Activated CD4-positive, alpha-beta memory T cell treated with anti-CD3 and anti-CD28 coated beads, Interleukin-2, amount 10 ng/mL, durations not matched to agents 7 days and 5 days (primary cell): ENCODE measurements at regions of chr3 and their contacts with region 1.

Region 1: GRCh38 chr3:151168269-151169094 is 34.5 kb downstream of the GPR171 start:
- DNase-seq: peak; percentile 86
- H3K4me3 Mint-ChIP-seq: no peak overlapping the region
- H3K27ac Mint-ChIP-seq: no peak overlapping the region
- H3K4me1 Mint-ChIP-seq: peaks cover 48% of the 10 kb centered on the region
- H3K27me3 Mint-ChIP-seq: no peaks in the 10 kb centered on the region

Region 2: GRCh38 chr3:149401215-149401925 is 1767.1 kb before region 1 on chr3:
- CTCF ChIA-PET with region 1: no interaction called
- POLR2A ChIA-PET with region 1: no interaction called
- DNase-seq: no peak
- H3K4me3 Mint-ChIP-seq: no peak overlapping the region
- H3K27ac Mint-ChIP-seq: no peak overlapping the region
- H3K4me1 Mint-ChIP-seq: no peaks in the 10 kb centered on the region
- H3K27me3 Mint-ChIP-seq: peaks cover 17% of the 10 kb centered on the region

Region 3: GRCh38 chr3:151203051-151203420 is 34.6 kb after region 1 on chr3 and contains the start of gene GPR171:
- CTCF ChIA-PET with region 1: interaction called, 56 read pairs
- POLR2A ChIA-PET with region 1: interaction called, 73 read pairs
- DNase-seq: peak; percentile 82
- H3K4me3 Mint-ChIP-seq: peak within 1 kb of the TSS; percentile 90
- H3K27ac Mint-ChIP-seq: peak within 1 kb of the TSS; percentile 98
- H3K4me1 Mint-ChIP-seq: peaks cover 60% of the 10 kb centered on the region
- H3K27me3 Mint-ChIP-seq: no peaks in the 10 kb centered on the region
- total RNA-seq, gene GPR171: 204 to 222 TPM

Region 4: GRCh38 chr3:151219056-151219455 is 50.6 kb after region 1 on chr3:
- CTCF ChIA-PET with region 1: interaction called, 89 read pairs
- POLR2A ChIA-PET with region 1: no interaction called
- DNase-seq: no peak
- H3K4me3 Mint-ChIP-seq: no peak overlapping the region
- H3K27ac Mint-ChIP-seq: no peak overlapping the region
- H3K4me1 Mint-ChIP-seq: peaks cover 7% of the 10 kb centered on the region
- H3K27me3 Mint-ChIP-seq: no peaks in the 10 kb centered on the region

Region 5: DNA sequence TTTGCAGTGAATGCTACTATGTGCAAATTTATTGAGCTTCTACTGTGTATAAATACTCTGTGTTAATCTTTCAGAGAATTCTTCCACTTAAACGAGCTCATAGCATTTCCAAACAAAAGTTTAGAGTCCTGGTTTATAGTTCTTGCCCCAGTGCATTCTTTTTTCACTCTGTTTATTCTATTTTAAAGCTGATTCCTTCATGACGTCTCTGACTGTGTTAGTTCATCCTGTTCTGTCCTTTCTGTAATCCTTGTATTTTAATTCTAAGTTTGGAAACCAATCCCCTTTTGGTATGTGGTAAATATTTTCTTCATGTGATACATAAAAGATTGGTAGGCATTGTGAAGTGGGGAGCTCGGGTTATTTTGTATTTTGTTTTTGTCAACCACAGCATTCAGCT is 91.2 kb after region 1 on chr3:
- CTCF ChIA-PET with region 1: interaction called, 12 read pairs
- POLR2A ChIA-PET with region 1: no interaction called
- DNase-seq: no peak
- H3K4me3 Mint-ChIP-seq: no peak overlapping the region
- H3K27ac Mint-ChIP-seq: no peak overlapping the region
- H3K4me1 Mint-ChIP-seq: no peaks in the 10 kb centered on the region
- H3K27me3 Mint-ChIP-seq: no peaks in the 10 kb centered on the region

Region 6: GRCh38 chr3:151282921-151283320 is 114.4 kb after region 1 on chr3:
- CTCF ChIA-PET with region 1: interaction called, 112 read pairs
- POLR2A ChIA-PET with region 1: interaction called, 4 read pairs
- DNase-seq: no peak
- H3K4me3 Mint-ChIP-seq: no peak overlapping the region
- H3K27ac Mint-ChIP-seq: peak overlapping the region; percentile 60
- H3K4me1 Mint-ChIP-seq: peaks cover 45% of the 10 kb centered on the region
- H3K27me3 Mint-ChIP-seq: no peaks in the 10 kb centered on the region